Heart left ventricle (tissue), 16 donors: ENCODE measurements at regions of chr1 and their contacts with region 1.

Region 1: DNA sequence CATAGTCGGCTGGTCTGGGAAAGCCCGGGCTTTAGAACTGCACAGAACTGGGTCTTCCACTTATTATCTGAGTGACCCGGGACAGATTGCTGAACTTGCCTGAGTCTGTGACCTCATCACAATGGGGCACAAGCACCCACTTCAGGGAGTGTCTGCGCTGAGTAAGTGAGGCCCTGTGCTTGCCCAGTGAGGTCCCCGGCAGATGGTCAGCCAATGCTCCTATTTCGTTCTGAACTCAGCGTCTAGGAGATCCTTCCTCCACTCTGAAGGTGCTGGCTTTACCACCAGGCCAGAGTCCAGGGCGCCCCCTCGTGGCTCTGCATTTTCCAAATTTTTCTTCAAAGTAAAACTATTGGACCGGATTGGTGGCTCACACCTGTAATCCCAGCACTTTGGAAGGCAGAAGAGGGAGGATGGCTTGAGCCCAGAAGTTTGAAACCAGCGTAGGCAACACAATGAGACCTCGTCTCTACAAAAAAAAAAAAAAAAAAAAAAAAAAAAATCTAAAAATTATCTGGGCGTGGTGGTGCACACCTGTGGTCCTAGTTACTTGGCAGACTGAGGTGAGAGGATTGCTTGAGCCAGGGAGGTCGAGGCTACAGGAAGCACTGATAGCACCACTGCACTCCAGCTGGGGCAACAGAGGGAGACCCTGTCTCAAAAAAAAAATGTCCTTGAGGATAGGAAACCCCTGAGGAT is 61.7 kb downstream of the FCRL5 start:
- DNase-seq: peak in 4 of 5 donors; percentile 27 to 41 (median 34)
- ATAC-seq: peak in 3 of 4 donors; percentile 26 to 61 (median 31)
- H3K4me3 ChIP-seq: no peak overlapping the region
- H3K27ac ChIP-seq: no peak overlapping the region
- H3K4me1 ChIP-seq: no peaks in the 10 kb centered on the region
- H3K27me3 ChIP-seq: peaks cover 0 to 26% (median 3%) of the 10 kb centered on the region in 9 donors
- CTCF ChIP-seq: peak; percentile 21 to 60 (median 48)
- POLR2A ChIP-seq: no peak

Region 2: DNA sequence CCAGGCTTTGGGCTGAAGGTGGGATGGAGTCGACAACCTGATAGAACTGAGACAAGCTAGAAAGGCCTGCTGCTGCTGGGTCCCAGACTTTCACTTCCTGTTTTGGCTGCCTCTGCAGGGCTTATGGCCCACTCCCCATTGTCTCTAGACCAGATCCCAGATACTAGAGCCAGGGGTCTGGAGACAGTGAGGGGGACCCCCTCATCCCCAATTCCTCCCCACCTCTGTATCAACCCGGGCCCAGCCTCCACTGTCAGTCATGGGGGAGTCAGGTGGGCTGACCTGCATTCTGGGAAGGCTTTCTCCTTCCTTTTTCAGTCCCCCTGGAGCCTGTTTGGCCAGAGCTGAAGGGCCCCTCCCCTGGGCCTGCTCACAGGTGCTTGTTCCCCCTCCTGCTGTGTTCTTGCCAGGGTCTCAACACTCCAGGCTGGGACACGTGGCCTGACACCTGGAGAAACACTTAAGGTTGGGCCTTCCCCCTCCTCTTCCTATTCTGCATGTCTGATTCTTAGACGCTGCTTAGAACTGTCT is 373.0 kb before region 1 on chr1:
- intact Hi-C with region 1: no loop called
- DNase-seq: no peak
- ATAC-seq: no peak
- H3K4me3 ChIP-seq: no peak overlapping the region
- H3K27ac ChIP-seq: no peak overlapping the region
- H3K4me1 ChIP-seq: peaks cover 0 to 12% (median 0%) of the 10 kb centered on the region in 12 donors
- H3K27me3 ChIP-seq: peaks cover 0 to 18% (median 0%) of the 10 kb centered on the region in 9 donors
- CTCF ChIP-seq: no peak
- POLR2A ChIP-seq: no peak

Region 3: GRCh38 chr1:157170677-157171515 is 319.7 kb before region 1 on chr1:
- intact Hi-C with region 1: loop called in 1 of 10 experiments (anchors 5 kb)
- DNase-seq: no peak
- ATAC-seq: no peak
- H3K4me3 ChIP-seq: no peak overlapping the region
- H3K27ac ChIP-seq: no peak overlapping the region
- H3K4me1 ChIP-seq: no peaks in the 10 kb centered on the region
- H3K27me3 ChIP-seq: peaks cover 0 to 14% (median 0%) of the 10 kb centered on the region in 9 donors
- CTCF ChIP-seq: peak in 9 of 12 donors; percentile 18 to 52 (median 39)
- POLR2A ChIP-seq: no peak

Region 4: GRCh38 chr1:157199421-157199755 is 291.2 kb before region 1 on chr1:
- intact Hi-C with region 1: loop called in 9 of 10 experiments (anchors 2 to 10 kb)
- DNase-seq: no peak
- ATAC-seq: no peak
- H3K4me3 ChIP-seq: no peak overlapping the region
- H3K27ac ChIP-seq: no peak overlapping the region
- H3K4me1 ChIP-seq: peaks cover 0 to 9% (median 0%) of the 10 kb centered on the region in 12 donors
- H3K27me3 ChIP-seq: peaks cover 14 to 41% (median 16%) of the 10 kb centered on the region in 9 donors
- CTCF ChIP-seq: no peak
- POLR2A ChIP-seq: no peak

Region 5: GRCh38 chr1:157369808-157370521 is 120.7 kb before region 1 on chr1:
- intact Hi-C with region 1: loop called (anchors 2 to 5 kb)
- DNase-seq: no peak
- ATAC-seq: peak in 2 of 4 donors; percentile 71 to 76
- H3K4me3 ChIP-seq: no peak overlapping the region
- H3K27ac ChIP-seq: no peak overlapping the region
- H3K4me1 ChIP-seq: no peaks in the 10 kb centered on the region
- H3K27me3 ChIP-seq: peaks cover 0 to 6% (median 0%) of the 10 kb centered on the region in 9 donors
- CTCF ChIP-seq: peak; percentile 80 to 94 (median 90)
- POLR2A ChIP-seq: no peak

Region 6: GRCh38 chr1:157751283-157751682 is 260.7 kb after region 1 on chr1:
- intact Hi-C with region 1: no loop called
- DNase-seq: no peak
- ATAC-seq: no peak
- H3K4me3 ChIP-seq: no peak overlapping the region
- H3K27ac ChIP-seq: no peak overlapping the region
- H3K4me1 ChIP-seq: no peaks in the 10 kb centered on the region
- H3K27me3 ChIP-seq: peaks cover 0 to 5% (median 0%) of the 10 kb centered on the region in 9 donors
- CTCF ChIP-seq: no peak
- POLR2A ChIP-seq: no peak